Left cardiac atrium (tissue), 4 donors: ENCODE measurements at regions of chr2 and their contacts with region 1.

Region 1: GRCh38 chr2:219642465-219643080 is 15.1 kb downstream of the SLC4A3 start:
- DNase-seq: peak; percentile 98
- ATAC-seq: peak; percentile 53 to 58

Region 2: GRCh38 chr2:219418155-219418569 is 224.4 kb before region 1 on chr2 and contains the start of gene DES:
- intact Hi-C with region 1: loop called in 1 of 2 experiments (anchors 10 kb)
- DNase-seq: peak; percentile 70
- ATAC-seq: peak; percentile 68 to 78
- total RNA-seq, gene DES: 5,895 to 7,519 TPM

Region 3: GRCh38 chr2:219543601-219544358 is 98.8 kb before region 1 on chr2 and contains the starts of genes CHPF and TMEM198:
- intact Hi-C with region 1: loop called in 1 of 2 experiments (anchors 2 kb)
- DNase-seq: peak; percentile 99
- ATAC-seq: peak; percentile 91 to 92
- total RNA-seq, gene CHPF: 72.4 to 113 TPM
- total RNA-seq, gene TMEM198: 3.2 to 4.1 TPM

Region 4: GRCh38 chr2:219571311-219572236 is 71.0 kb before region 1 on chr2 and contains the start of gene OBSL1:
- intact Hi-C with region 1: loop called in 1 of 2 experiments (anchors 2 kb)
- DNase-seq: peak; percentile 87
- ATAC-seq: peak; percentile 81 to 88
- total RNA-seq, gene OBSL1: 121 to 187 TPM

Region 5: DNA sequence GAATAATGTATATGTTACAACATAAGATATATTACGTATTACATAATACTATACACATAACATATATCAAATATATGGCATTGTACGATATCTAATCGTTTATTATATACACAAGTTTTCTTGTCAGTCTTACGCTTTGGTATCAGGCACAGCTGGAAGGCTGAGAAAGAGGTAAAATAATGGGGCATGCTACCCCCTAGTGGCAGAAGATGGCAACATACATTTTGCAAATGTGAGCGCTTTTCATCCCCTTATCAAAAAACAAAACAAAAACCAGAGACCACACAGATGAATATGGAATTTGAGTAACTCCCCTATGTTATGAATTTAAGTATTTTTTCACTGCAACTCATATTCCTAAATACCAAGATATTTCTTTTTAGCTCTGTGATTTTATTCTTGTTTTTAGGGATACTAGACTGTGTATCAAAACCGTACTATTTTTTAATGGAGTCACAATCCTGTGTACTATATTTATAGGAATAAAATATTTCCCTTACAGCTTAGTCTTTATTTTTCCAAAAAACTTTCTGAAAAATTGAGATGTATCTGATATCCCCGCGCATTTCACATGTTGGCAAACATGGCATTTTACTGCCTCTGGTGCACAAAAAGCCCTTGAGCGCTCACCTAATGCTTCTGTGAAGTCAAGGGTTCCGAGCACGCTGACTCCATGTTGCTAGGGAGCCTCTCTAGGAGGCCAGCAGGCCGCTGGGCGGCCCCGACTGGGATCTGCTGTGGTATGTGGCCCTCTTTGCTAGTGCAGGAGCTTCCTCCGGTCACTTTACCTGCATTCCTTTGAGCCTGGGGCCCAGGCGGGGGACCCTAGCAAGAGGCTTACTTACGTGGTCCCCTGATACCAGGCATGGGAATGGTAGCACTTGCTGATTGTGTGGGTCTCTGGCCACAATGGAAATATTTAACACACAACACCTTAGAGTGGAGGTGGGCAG is 47.4 kb after region 1 on chr2:
- intact Hi-C with region 1: loop called in 1 of 2 experiments (anchors 2 kb)
- DNase-seq: no peak
- ATAC-seq: peak; percentile 54 to 59

Region 6: GRCh38 chr2:219744600-219744999 is 102.0 kb after region 1 on chr2:
- intact Hi-C with region 1: no loop called
- DNase-seq: no peak
- ATAC-seq: no peak